Activated CD4-positive, alpha-beta memory T cell treated with anti-CD3 and anti-CD28 coated beads for 36 hours (primary cell): ENCODE measurements at regions of chr19 and their contacts with region 1.

Region 1: GRCh38 chr19:49301165-49301865 is 23.7 kb downstream of the SLC6A16 start:
- DNase-seq: peak; percentile 88
- H3K4me3 Mint-ChIP-seq: no peak overlapping the region
- H3K27ac Mint-ChIP-seq: no peak overlapping the region
- H3K4me1 Mint-ChIP-seq: no peaks in the 10 kb centered on the region
- H3K27me3 Mint-ChIP-seq: no peaks in the 10 kb centered on the region

Region 2: DNA sequence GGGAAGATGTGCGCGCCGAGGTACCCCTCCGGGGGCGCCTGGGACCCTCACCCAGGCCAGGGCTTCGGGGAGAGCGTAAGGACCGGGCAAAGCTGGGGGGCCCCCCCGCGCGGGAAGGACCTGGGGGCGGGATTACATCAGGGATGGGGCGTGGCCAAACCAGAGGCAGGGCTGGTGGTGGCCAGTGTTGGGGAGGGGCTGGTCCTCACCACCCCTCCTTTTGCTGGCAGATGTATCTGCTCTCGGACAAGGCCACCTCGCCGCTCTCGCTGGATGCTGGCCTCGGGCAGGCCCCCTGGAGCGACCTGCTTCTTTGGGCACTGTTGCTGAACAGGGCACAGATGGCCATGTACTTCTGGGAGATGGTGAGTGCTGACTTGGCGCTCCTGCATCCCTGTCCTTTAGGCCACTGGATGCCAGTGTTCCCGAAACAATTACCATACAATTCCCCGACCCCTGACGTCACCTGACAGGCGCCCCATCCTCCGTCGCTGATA is 118.4 kb before region 1 on chr19:
- CTCF ChIA-PET with region 1: no interaction called
- POLR2A ChIA-PET with region 1: no interaction called
- intact Hi-C with region 1: no loop called
- DNase-seq: no peak
- H3K4me3 Mint-ChIP-seq: no peak overlapping the region
- H3K27ac Mint-ChIP-seq: no peak overlapping the region
- H3K4me1 Mint-ChIP-seq: no peaks in the 10 kb centered on the region
- H3K27me3 Mint-ChIP-seq: no peaks in the 10 kb centered on the region

Region 3: GRCh38 chr19:49224856-49225255 is 76.5 kb before region 1 on chr19:
- CTCF ChIA-PET with region 1: interaction called, 14 read pairs
- POLR2A ChIA-PET with region 1: no interaction called
- intact Hi-C with region 1: loop called (anchors 1 kb)
- DNase-seq: peak; percentile 67
- H3K4me3 Mint-ChIP-seq: no peak overlapping the region
- H3K27ac Mint-ChIP-seq: peak overlapping the region; percentile 18
- H3K4me1 Mint-ChIP-seq: peaks cover 2% of the 10 kb centered on the region
- H3K27me3 Mint-ChIP-seq: peaks cover 11% of the 10 kb centered on the region

Region 4: DNA sequence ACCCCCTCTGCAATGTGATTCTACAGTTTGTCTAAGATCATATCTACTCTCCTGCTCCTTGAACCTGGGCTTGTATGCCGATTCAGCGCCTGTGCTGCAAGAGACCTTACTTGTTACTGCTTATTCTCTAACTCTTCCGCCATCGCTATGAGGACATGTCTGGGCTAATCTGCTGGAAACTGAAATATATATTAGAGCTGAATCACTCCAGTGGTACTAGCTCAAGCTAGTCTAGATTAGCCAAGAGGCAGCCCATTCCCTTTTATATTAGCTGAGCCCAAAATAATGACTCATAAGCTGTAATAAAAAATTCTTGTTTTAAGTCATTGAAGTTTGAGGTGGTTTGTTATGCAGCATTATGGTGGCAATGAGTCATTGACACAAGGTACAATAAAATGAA is 29.1 kb before region 1 on chr19:
- CTCF ChIA-PET with region 1: interaction called, 47 read pairs
- POLR2A ChIA-PET with region 1: no interaction called
- intact Hi-C with region 1: loop called (anchors 2 kb)
- DNase-seq: no peak
- H3K4me3 Mint-ChIP-seq: no peak overlapping the region
- H3K27ac Mint-ChIP-seq: no peak overlapping the region
- H3K4me1 Mint-ChIP-seq: peaks cover 12% of the 10 kb centered on the region
- H3K27me3 Mint-ChIP-seq: peaks cover 11% of the 10 kb centered on the region

Region 5: GRCh38 chr19:49318296-49318695 is 17.0 kb after region 1 on chr19:
- CTCF ChIA-PET with region 1: interaction called, 12 read pairs
- POLR2A ChIA-PET with region 1: no interaction called
- intact Hi-C with region 1: no loop called
- DNase-seq: no peak
- H3K4me3 Mint-ChIP-seq: no peak overlapping the region
- H3K27ac Mint-ChIP-seq: no peak overlapping the region
- H3K4me1 Mint-ChIP-seq: peaks cover 4% of the 10 kb centered on the region
- H3K27me3 Mint-ChIP-seq: no peaks in the 10 kb centered on the region

Region 6: GRCh38 chr19:49331616-49332055 is 30.3 kb after region 1 on chr19:
- CTCF ChIA-PET with region 1: interaction called, 40 read pairs
- POLR2A ChIA-PET with region 1: no interaction called
- intact Hi-C with region 1: no loop called
- DNase-seq: peak; percentile 80
- H3K4me3 Mint-ChIP-seq: peak overlapping the region; percentile 43
- H3K27ac Mint-ChIP-seq: peak overlapping the region; percentile 99
- H3K4me1 Mint-ChIP-seq: peaks cover 69% of the 10 kb centered on the region
- H3K27me3 Mint-ChIP-seq: no peaks in the 10 kb centered on the region

Region 7: GRCh38 chr19:49758292-49758691 is 457.0 kb after region 1 on chr19:
- CTCF ChIA-PET with region 1: no interaction called
- POLR2A ChIA-PET with region 1: no interaction called
- intact Hi-C with region 1: no loop called
- DNase-seq: no peak
- H3K4me3 Mint-ChIP-seq: no peak overlapping the region
- H3K27ac Mint-ChIP-seq: no peak overlapping the region
- H3K4me1 Mint-ChIP-seq: no peaks in the 10 kb centered on the region
- H3K27me3 Mint-ChIP-seq: no peaks in the 10 kb centered on the region